ENCODE measurements at regions of chr1 and their contacts with region 1.

Region 1: DNA sequence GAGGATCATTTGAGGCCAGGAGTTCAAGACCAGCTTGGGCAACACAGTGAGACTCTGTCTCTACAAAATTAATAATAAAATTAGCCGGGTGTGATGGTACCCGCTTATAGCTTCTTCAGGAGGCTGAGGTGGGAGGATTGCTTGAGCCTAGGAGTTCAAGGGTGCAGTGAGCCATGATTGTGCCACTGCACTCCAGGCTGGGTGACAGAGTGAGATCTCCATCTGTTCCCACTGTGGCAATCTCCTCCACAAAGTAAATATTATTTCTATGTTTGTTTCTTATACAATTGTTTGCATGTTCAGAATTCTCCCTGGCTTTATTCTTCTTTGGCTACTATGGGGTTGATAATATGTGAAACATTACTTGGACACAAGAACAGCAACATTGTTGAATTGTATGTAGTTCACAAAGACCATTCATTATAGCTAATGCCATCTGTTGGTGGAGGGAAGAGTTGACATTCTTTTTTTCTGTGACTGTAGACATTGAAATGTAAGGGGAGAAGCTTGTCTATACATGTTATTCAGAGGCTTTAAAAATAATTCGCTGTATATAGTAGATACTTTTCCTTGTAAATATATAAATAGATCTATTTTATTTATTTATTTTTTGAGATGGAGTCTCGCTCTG is 47.8 kb upstream of the SRSF10 start:
- DNase-seq: no peak
- H3K4me3 ChIP-seq: no peak overlapping the region
- H3K27ac ChIP-seq: no peak overlapping the region
- H3K4me1 ChIP-seq: peaks cover 0 to 5% of the 10 kb centered on the region in 2 donors
- H3K27me3 ChIP-seq: no peaks in the 10 kb centered on the region
- CTCF ChIP-seq: peak; percentile 61 to 77 (median 70)
- POLR2A ChIP-seq: no peak

Region 2: GRCh38 chr1:23889074-23889473 is 138.9 kb before region 1 on chr1:
- intact Hi-C with region 1: no loop called
- DNase-seq: no peak
- H3K4me3 ChIP-seq: no peak overlapping the region
- H3K27ac ChIP-seq: no peak overlapping the region
- H3K4me1 ChIP-seq: no peaks in the 10 kb centered on the region
- H3K27me3 ChIP-seq: no peaks in the 10 kb centered on the region
- CTCF ChIP-seq: no peak
- POLR2A ChIP-seq: no peak

Region 3: DNA sequence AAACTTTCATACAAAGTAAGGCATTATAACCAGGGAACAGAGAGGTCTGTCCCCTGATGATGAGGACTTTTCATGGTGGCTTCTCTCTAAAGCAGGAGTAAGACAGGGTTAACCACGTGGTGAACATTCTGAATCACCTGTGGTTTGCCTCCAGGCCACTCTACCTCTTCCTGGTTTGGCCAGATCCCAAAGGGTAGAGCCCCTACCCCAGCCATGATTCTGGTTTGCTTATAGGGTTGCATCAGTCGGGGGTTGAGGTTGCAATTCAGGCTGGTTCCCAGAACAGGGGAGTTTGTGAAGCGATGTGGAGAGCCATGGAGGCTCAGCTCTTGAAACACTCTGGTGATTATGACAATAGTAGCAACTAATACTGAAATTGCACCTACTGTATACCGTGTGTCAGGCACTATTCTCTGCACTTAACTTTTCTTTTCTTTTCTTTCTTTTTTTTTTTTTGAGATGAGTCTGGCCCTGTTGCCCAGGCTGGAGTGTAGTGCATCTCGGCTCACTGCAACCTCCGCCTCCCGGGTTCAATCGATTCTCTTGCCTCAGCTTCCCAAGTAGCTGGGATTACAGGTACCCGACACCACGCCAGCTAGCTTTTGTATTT is 123.1 kb before region 1 on chr1:
- intact Hi-C with region 1: no loop called
- DNase-seq: no peak
- H3K4me3 ChIP-seq: no peak overlapping the region
- H3K27ac ChIP-seq: no peak overlapping the region
- H3K4me1 ChIP-seq: peaks cover 0 to 5% of the 10 kb centered on the region in 2 donors
- H3K27me3 ChIP-seq: peaks cover 0 to 9% of the 10 kb centered on the region in 2 donors
- CTCF ChIP-seq: no peak
- POLR2A ChIP-seq: no peak

Region 4: GRCh38 chr1:23959041-23959460 is 68.9 kb before region 1 on chr1:
- intact Hi-C with region 1: loop called (anchors 10 kb)
- DNase-seq: peak; percentile 80 to 86
- H3K4me3 ChIP-seq: peak overlapping the region; percentile 83 to 88
- H3K27ac ChIP-seq: peak overlapping the region; percentile 98 to 99
- H3K4me1 ChIP-seq: peaks cover 0 to 8% of the 10 kb centered on the region in 2 donors
- H3K27me3 ChIP-seq: no peaks in the 10 kb centered on the region
- CTCF ChIP-seq: peak in 3 of 4 experiments; percentile 31 to 65 (median 56)
- POLR2A ChIP-seq: no peak

Region 5: DNA sequence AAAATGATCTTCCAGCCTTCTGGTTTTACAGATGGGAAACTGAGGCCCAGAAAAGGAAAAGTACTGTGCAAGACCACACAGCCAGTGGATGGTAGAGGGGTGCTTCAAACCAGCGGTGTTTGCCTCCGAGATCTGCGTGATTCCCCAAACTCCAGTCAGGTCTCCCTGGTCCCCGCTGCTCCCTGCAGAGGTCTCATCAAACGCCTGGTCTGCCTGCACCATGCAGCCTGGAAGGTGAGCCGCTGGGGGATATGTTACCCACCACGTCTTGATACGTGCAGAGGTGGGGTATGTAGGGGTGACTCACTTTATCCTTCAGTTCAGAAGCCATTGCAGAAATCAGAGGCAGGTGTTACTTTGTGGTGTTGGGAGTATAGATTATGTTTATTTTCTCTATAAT is 27.7 kb after region 1 on chr1:
- intact Hi-C with region 1: no loop called
- DNase-seq: no peak
- H3K4me3 ChIP-seq: no peak overlapping the region
- H3K27ac ChIP-seq: no peak overlapping the region
- H3K4me1 ChIP-seq: no peaks in the 10 kb centered on the region
- H3K27me3 ChIP-seq: no peaks in the 10 kb centered on the region
- CTCF ChIP-seq: no peak
- POLR2A ChIP-seq: no peak

Measured in uterus (tissue), 4 donors.